GM12878 (cell line): ENCODE measurements at regions of chr18 and their contacts with region 1.

Region 1: GRCh38 chr18:830315-830901 is 18.4 kb upstream of the YES1 start:
- DNase-seq: no peak
- ATAC-seq: peak; percentile 62
- H3K4me3 ChIP-seq: no peak overlapping the region
- H3K27ac ChIP-seq: no peak overlapping the region
- H3K4me1 ChIP-seq: peaks cover 7% of the 10 kb centered on the region
- H3K27me3 ChIP-seq: no peaks in the 10 kb centered on the region
- CTCF ChIP-seq: no peak
- EP300 ChIP-seq: no peak
- POLR2A ChIP-seq: no peak
- RAD21 ChIP-seq: no peak

Region 2: GRCh38 chr18:623761-624620 is 206.4 kb before region 1 on chr18:
- CTCF ChIA-PET with region 1: interaction called, 251 read pairs
- POLR2A ChIA-PET with region 1: interaction called, 4 read pairs
- RAD21 ChIA-PET with region 1: interaction called, 168 read pairs
- SMC1A ChIA-PET with region 1: interaction called, 188 read pairs
- in situ Hi-C with region 1: loop called (anchors 5 kb)
- intact Hi-C with region 1: loop called (anchors 1 kb)
- DNase-seq: no peak
- ATAC-seq: peak; percentile 97
- H3K4me3 ChIP-seq: no peak overlapping the region
- H3K27ac ChIP-seq: no peak overlapping the region
- H3K4me1 ChIP-seq: no peaks in the 10 kb centered on the region
- H3K27me3 ChIP-seq: no peaks in the 10 kb centered on the region
- CTCF ChIP-seq: peak; percentile 51 to 73 (median 72)
- EP300 ChIP-seq: no peak
- POLR2A ChIP-seq: no peak
- RAD21 ChIP-seq: peak; percentile 84

Region 3: DNA sequence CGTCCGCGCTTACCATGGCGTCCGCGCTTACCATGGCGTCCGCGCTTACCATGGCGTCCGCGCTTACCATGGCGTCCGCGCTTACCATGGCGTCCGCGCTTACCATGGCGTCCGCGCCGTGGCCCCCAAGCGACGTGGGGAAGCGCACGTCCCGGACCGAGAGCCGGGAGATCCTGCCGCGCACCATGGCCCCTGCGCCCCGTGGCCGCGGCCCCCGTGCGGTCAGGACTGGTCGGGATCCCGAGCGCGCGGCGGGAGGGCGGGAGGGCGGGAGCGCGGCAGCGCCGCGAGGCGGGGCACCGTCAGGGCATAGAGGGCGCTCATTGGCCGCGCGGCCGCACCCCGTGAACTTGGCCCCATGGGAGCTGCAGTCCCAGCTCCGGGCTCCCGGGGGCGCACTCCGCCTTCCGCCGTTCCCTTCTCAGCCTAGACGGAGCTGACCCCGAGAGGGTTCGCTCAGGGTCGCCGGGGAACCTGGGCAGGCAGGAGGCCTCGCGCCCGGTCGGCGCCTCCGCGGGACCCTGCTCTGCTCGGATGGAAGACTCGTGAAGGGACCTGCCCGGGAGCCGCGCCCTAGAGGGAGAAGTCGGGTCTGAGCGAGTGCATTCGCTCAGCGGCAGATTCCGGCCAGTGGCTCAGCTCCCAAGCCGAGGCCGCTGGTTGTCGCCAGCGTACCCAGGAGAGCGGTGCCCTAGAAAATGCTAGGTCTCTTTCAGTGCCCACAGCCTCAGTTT is 117.8 kb before region 1 on chr18 and contains the start of gene ENOSF1:
- CTCF ChIA-PET with region 1: interaction called, 14 read pairs
- POLR2A ChIA-PET with region 1: no interaction called
- RAD21 ChIA-PET with region 1: interaction called, 9 read pairs
- SMC1A ChIA-PET with region 1: interaction called, 8 read pairs
- in situ Hi-C with region 1: no loop called
- intact Hi-C with region 1: no loop called
- DNase-seq: no peak
- ATAC-seq: no peak
- H3K4me3 ChIP-seq: peak within 1 kb of the TSS; percentile 69
- H3K27ac ChIP-seq: peak within 1 kb of the TSS; percentile 51
- H3K4me1 ChIP-seq: no peaks in the 10 kb centered on the region; the same call in 1 of the 2 replicates
- H3K27me3 ChIP-seq: no peaks in the 10 kb centered on the region
- CTCF ChIP-seq: peak in 2 of 3 experiments; percentile 37 to 62; a peak in 4 of 6 replicates
- EP300 ChIP-seq: no peak
- POLR2A ChIP-seq: peak; percentile 81
- RAD21 ChIP-seq: peak; percentile 46; the same call in 1 of the 2 replicates
- polyA plus RNA-seq, gene ENOSF1: 12.5 to 13.3 TPM

Region 4: GRCh38 chr18:754666-755065 is 75.7 kb before region 1 on chr18:
- CTCF ChIA-PET with region 1: interaction called, 32 read pairs
- POLR2A ChIA-PET with region 1: no interaction called
- RAD21 ChIA-PET with region 1: interaction called, 3 read pairs
- SMC1A ChIA-PET with region 1: interaction called, 20 read pairs
- in situ Hi-C with region 1: no loop called
- intact Hi-C with region 1: no loop called
- DNase-seq: no peak
- ATAC-seq: no peak
- H3K4me3 ChIP-seq: no peak overlapping the region
- H3K27ac ChIP-seq: no peak overlapping the region
- H3K4me1 ChIP-seq: no peaks in the 10 kb centered on the region
- H3K27me3 ChIP-seq: no peaks in the 10 kb centered on the region
- CTCF ChIP-seq: no peak
- EP300 ChIP-seq: no peak
- POLR2A ChIP-seq: no peak
- RAD21 ChIP-seq: no peak

Region 5: GRCh38 chr18:799943-800342 is 30.5 kb before region 1 on chr18:
- CTCF ChIA-PET with region 1: interaction called, 12 read pairs
- POLR2A ChIA-PET with region 1: no interaction called
- RAD21 ChIA-PET with region 1: interaction called, 6 read pairs
- SMC1A ChIA-PET with region 1: interaction called, 19 read pairs
- in situ Hi-C with region 1: no loop called
- intact Hi-C with region 1: no loop called
- DNase-seq: no peak
- ATAC-seq: no peak
- H3K4me3 ChIP-seq: no peak overlapping the region
- H3K27ac ChIP-seq: no peak overlapping the region
- H3K4me1 ChIP-seq: peaks cover 15% of the 10 kb centered on the region
- H3K27me3 ChIP-seq: no peaks in the 10 kb centered on the region
- CTCF ChIP-seq: no peak
- EP300 ChIP-seq: no peak
- POLR2A ChIP-seq: no peak
- RAD21 ChIP-seq: no peak

Region 6: GRCh38 chr18:848062-848861 is 17.9 kb after region 1 on chr18:
- CTCF ChIA-PET with region 1: interaction called, 66 read pairs
- POLR2A ChIA-PET with region 1: no interaction called
- RAD21 ChIA-PET with region 1: interaction called, 3 read pairs
- SMC1A ChIA-PET with region 1: interaction called, 3 read pairs
- in situ Hi-C with region 1: no loop called
- intact Hi-C with region 1: no loop called
- DNase-seq: no peak
- ATAC-seq: no peak
- H3K4me3 ChIP-seq: no peak overlapping the region
- H3K27ac ChIP-seq: no peak overlapping the region
- H3K4me1 ChIP-seq: no peaks in the 10 kb centered on the region
- H3K27me3 ChIP-seq: no peaks in the 10 kb centered on the region
- CTCF ChIP-seq: no peak
- EP300 ChIP-seq: no peak
- POLR2A ChIP-seq: no peak
- RAD21 ChIP-seq: no peak